MCF 10A (cell line): ENCODE measurements at regions of chr1 and their contacts with region 1.

Region 1: GRCh38 chr1:30801771-30802198 is 44.2 kb upstream of the LAPTM5 start:
- DNase-seq: peak; percentile 75
- H3K4me3 Mint-ChIP-seq: no peak overlapping the region
- H3K27ac Mint-ChIP-seq: no peak overlapping the region
- H3K4me1 Mint-ChIP-seq: peaks cover 50% of the 10 kb centered on the region
- H3K27me3 Mint-ChIP-seq: no peaks in the 10 kb centered on the region
- CTCF ChIP-seq: peak; percentile 94

Region 2: GRCh38 chr1:30718636-30719405 is 83.0 kb before region 1 on chr1:
- CTCF ChIA-PET with region 1: interaction called, 31 read pairs
- POLR2A ChIA-PET with region 1: interaction called, 4 read pairs
- intact Hi-C with region 1: no loop called
- DNase-seq: peak; percentile 96
- H3K4me3 Mint-ChIP-seq: peak overlapping the region; percentile 89
- H3K27ac Mint-ChIP-seq: peak overlapping the region; percentile 91
- H3K4me1 Mint-ChIP-seq: peaks cover 5% of the 10 kb centered on the region
- H3K27me3 Mint-ChIP-seq: no peaks in the 10 kb centered on the region
- CTCF ChIP-seq: peak; percentile 96

Region 3: GRCh38 chr1:30750731-30751291 is 51.0 kb before region 1 on chr1:
- CTCF ChIA-PET with region 1: no interaction called
- POLR2A ChIA-PET with region 1: no interaction called
- intact Hi-C with region 1: no loop called
- DNase-seq: no peak
- H3K4me3 Mint-ChIP-seq: no peak overlapping the region
- H3K27ac Mint-ChIP-seq: no peak overlapping the region
- H3K4me1 Mint-ChIP-seq: peaks cover 37% of the 10 kb centered on the region
- H3K27me3 Mint-ChIP-seq: no peaks in the 10 kb centered on the region
- CTCF ChIP-seq: no peak

Region 4: DNA sequence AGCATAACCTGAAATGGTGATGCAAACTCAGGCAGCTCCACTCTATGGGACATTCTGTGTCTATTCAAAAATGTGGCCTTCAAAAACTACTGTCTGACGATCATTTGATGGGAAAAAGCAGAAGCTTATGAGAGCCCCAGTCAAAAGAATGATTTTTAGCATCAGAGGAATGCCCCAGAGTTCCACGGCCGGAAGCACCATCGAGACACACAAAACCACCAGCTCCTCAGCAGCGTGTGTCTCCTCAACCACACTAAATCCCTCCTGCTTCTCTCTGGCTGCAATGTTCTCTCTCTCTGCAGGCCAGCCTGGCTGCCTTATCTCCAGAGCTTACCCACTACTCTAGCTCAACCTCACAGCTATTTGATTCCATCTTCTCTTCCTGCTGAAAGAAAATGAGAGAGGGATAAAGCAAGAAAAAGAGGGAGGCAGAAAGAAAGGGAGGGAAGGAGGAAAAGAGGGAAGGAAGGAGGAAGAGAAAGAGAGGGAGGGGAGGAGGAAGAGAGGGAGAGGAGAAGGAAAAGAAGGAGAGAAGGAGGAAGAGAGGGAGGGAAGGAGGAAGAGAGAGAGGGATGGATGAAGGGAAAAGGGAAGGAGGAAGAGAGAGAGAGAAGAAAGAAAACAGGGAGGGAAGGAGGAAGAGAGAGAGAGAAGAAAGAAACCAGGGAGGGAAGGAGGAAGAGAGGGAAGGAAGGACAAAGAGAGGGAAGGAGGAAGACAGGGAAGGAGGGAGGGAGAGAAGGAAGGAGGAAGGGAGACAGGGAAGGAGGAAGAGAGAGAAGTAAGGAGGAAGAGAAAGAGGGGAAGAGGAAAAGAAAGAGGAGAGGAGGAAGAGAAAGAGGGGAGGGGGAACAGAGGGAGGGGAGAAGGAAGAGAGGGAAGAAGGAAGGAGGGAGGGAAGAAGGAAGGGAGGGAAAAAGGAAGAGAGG is 10.7 kb before region 1 on chr1:
- CTCF ChIA-PET with region 1: interaction called, 70 read pairs
- POLR2A ChIA-PET with region 1: interaction called, 53 read pairs
- intact Hi-C with region 1: no loop called
- DNase-seq: no peak
- H3K4me3 Mint-ChIP-seq: no peak overlapping the region
- H3K27ac Mint-ChIP-seq: peak overlapping the region; percentile 100
- H3K4me1 Mint-ChIP-seq: peaks cover 48% of the 10 kb centered on the region
- H3K27me3 Mint-ChIP-seq: no peaks in the 10 kb centered on the region
- CTCF ChIP-seq: no peak

Region 5: GRCh38 chr1:30837653-30838052 is 35.9 kb after region 1 on chr1:
- CTCF ChIA-PET with region 1: interaction called, 12 read pairs
- POLR2A ChIA-PET with region 1: no interaction called
- intact Hi-C with region 1: no loop called
- DNase-seq: no peak
- H3K4me3 Mint-ChIP-seq: no peak overlapping the region
- H3K27ac Mint-ChIP-seq: no peak overlapping the region
- H3K4me1 Mint-ChIP-seq: no peaks in the 10 kb centered on the region
- H3K27me3 Mint-ChIP-seq: peaks cover 53% of the 10 kb centered on the region
- CTCF ChIP-seq: no peak

Region 6: GRCh38 chr1:30892671-30893073 is 90.9 kb after region 1 on chr1:
- CTCF ChIA-PET with region 1: interaction called, 12 read pairs
- POLR2A ChIA-PET with region 1: no interaction called
- intact Hi-C with region 1: no loop called
- DNase-seq: no peak
- H3K4me3 Mint-ChIP-seq: no peak overlapping the region
- H3K27ac Mint-ChIP-seq: no peak overlapping the region
- H3K4me1 Mint-ChIP-seq: peaks cover 18% of the 10 kb centered on the region
- H3K27me3 Mint-ChIP-seq: no peaks in the 10 kb centered on the region
- CTCF ChIP-seq: no peak

Region 7: DNA sequence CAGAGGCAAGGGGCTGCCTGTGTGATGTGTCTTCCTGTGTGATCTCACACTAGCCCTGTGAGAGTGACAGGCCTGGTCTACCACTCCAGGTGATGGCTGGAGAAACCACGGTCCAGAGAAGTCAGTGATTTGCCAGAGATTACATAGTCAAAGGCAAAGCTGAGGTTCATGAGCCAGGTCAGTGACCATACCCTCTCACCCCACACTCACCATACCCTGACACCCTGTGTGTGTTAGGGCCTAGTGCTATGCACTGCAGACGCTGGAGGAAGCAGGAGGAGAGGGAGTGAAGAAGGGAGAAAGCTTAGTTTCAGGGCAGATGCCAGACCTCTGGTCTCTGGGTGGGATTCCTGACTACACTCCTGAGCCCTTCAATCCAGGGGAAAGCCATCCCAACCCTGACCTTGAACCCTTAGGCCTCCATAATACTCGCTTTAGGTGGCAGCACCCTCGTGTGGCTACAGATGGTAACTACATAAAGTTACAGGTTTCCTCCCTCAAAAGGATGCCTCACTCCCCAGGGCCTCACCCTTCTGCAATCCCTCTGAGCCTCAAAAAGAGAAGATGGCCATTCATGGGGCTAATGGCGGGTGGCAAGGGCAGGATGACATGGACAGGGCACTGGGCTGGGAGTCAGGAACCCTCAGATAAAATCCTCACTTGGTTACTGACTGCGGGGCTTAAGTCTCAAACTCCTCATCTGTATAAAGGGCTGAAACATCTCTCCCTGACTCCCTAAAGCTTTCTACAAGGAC is 127.5 kb after region 1 on chr1:
- CTCF ChIA-PET with region 1: interaction called, 72 read pairs
- POLR2A ChIA-PET with region 1: interaction called, 3 read pairs
- intact Hi-C with region 1: no loop called
- DNase-seq: peak; percentile 73
- H3K4me3 Mint-ChIP-seq: no peak overlapping the region
- H3K27ac Mint-ChIP-seq: peak overlapping the region; percentile 49
- H3K4me1 Mint-ChIP-seq: peaks cover 14% of the 10 kb centered on the region
- H3K27me3 Mint-ChIP-seq: no peaks in the 10 kb centered on the region
- CTCF ChIP-seq: peak; percentile 68